ENCODE measurements at regions of chr18 and their contacts with region 1.

Region 1: DNA sequence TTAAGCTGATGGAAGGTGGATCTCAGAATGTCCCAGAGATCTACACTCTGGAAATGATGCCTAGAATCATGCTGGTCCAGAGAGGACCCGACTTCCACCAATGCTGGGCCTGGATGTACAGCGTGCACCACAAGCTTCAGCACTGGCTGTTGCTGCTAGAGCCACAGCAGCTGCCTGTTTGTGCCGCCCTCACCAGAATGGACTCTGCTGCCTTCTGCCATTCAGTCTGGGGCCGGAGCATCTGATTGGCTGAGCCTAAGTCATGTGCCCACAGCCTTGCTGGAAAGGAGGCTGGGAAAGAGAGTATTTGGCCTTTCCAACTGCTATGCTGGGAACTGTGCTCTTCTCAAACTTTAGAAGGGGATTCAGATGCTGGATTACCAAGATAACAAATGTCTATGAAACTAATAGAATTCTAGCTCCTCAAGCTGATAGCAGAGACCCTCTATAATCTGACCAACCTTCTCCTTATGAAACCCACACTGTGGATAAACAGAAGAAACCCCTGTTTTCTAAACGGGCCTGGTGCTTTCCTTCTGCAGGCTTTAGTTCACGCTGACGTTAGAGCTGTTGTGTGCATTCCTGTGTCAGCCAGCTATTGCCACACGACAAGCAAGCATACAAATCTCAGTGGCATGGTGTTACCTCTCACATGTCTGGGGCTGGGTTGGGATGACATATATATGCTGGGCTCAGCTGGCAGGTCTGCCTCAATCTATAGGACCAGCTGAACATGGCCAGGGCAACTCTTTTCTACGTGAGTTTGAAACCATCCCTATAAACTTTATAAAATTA is 4.1 kb upstream of the LOXHD1 start:
- DNase-seq: peak in 1 of 2 donors; percentile 55
- ATAC-seq: no peak
- H3K4me3 ChIP-seq: no peak overlapping the region
- H3K27ac ChIP-seq: no peak overlapping the region
- H3K4me1 ChIP-seq: no peaks in the 10 kb centered on the region
- H3K27me3 ChIP-seq: no peaks in the 10 kb centered on the region

Region 2: GRCh38 chr18:46097801-46098615 is 563.1 kb before region 1 on chr18 and contains the start of gene ATP5F1A:
- intact Hi-C with region 1: no loop called
- DNase-seq: peak; percentile 93 to 94
- ATAC-seq: peak; percentile 96
- H3K4me3 ChIP-seq: peak within 1 kb of the TSS; percentile 14 to 72
- H3K27ac ChIP-seq: peak within 1 kb of the TSS; percentile 18 to 74
- H3K4me1 ChIP-seq: peaks cover 0 to 1% of the 10 kb centered on the region in 2 donors
- H3K27me3 ChIP-seq: no peaks in the 10 kb centered on the region
- total RNA-seq, gene ATP5F1A: 189 TPM

Region 3: DNA sequence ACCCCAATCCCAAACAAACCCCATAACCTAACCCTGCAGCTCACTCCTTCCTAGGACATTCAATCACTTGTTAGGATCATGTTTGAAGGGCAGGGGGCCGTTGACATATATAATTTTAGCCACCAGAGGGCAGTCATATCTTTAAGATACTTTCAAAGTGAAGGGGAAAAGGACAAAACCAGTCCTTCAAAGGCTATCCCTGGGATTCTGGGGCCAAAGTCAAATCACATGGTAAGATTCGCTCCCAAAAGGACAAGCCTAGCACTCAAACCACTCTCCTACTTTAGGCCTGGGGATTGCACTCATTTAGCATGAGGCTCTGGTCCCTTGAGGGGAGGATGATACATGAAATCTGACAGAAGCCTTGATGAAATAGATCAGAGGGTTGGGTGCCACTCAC is 512.3 kb before region 1 on chr18:
- intact Hi-C with region 1: loop called (anchors 2 to 5 kb)
- DNase-seq: no peak
- ATAC-seq: peak; percentile 69
- H3K4me3 ChIP-seq: no peak overlapping the region
- H3K27ac ChIP-seq: no peak overlapping the region
- H3K4me1 ChIP-seq: no peaks in the 10 kb centered on the region
- H3K27me3 ChIP-seq: no peaks in the 10 kb centered on the region

Measured in aorta (tissue), 5 donors.